ENCODE measurements at regions of chr3 and their contacts with region 1.

Region 1: GRCh38 chr3:197002701-197003454 is 26.7 kb downstream of the MELTF start:
- DNase-seq: peak; percentile 94
- CTCF ChIP-seq: peak; percentile 95

Region 2: DNA sequence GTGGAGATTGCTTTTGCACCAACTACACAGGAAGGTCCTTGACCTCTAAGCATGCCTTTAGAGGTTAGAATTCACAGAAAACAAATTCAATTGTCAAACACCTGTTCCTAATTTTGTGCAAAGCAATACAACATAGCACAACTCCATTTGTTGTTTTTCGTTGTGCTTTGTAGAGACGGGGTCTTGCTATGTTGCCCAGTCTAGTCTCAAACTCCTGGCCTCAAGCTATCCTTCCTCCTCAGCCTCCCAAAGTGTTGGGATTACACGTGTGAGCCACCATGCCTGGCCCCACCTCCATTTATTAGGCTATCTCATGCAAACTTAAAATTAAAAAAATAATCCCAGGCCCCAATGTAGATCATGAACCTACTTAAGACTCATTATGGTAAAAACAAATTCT is 66.6 kb before region 1 on chr3:
- CTCF ChIA-PET with region 1: no interaction called
- POLR2A ChIA-PET with region 1: no interaction called
- DNase-seq: no peak
- CTCF ChIP-seq: no peak

Region 3: GRCh38 chr3:197015766-197016736 is 13.2 kb after region 1 on chr3:
- CTCF ChIA-PET with region 1: interaction called, 21 read pairs
- POLR2A ChIA-PET with region 1: no interaction called
- DNase-seq: no peak
- CTCF ChIP-seq: no peak

Region 4: GRCh38 chr3:197023241-197023997 is 20.5 kb after region 1 on chr3:
- CTCF ChIA-PET with region 1: interaction called, 42 read pairs
- POLR2A ChIA-PET with region 1: interaction called, 3 read pairs
- DNase-seq: peak; percentile 77
- CTCF ChIP-seq: no peak

Region 5: DNA sequence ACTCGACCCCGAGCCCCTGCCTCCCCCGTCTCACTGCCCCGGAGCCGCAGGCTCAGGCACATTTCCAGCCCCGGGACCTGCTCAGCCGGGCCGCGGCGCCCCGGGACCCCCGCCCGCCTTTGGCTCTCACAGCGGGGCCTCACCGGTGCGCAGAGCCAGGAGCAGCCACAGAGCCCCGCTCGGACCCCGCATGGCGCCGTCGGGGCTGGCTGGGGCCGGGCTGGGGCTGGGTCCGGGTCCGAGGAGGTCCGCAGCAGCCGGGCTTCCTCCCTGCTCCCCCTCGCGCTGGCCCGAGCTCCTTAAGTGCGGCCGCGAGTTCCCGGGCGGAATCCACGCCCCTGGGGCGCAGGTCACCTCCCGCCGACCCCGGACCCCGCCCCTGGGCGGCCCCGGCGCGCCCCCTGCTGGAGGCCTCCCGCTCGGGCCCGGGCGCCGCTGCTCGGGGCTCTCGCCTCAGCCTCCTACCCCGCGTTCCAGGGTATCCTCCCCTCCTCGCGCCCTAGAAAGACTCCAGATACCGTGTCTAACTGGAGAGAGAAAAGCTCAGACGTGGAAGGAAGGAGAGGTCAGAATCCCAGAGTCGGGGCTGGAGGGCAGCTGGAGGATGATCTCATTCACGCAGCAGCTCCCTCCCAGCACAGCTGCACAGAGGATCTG is 26.8 kb after region 1 on chr3 and contains the start of gene MELTF:
- CTCF ChIA-PET with region 1: interaction called, 42 read pairs
- POLR2A ChIA-PET with region 1: interaction called, 6 read pairs
- DNase-seq: peak; percentile 98
- CTCF ChIP-seq: peak; percentile 73

Region 6: DNA sequence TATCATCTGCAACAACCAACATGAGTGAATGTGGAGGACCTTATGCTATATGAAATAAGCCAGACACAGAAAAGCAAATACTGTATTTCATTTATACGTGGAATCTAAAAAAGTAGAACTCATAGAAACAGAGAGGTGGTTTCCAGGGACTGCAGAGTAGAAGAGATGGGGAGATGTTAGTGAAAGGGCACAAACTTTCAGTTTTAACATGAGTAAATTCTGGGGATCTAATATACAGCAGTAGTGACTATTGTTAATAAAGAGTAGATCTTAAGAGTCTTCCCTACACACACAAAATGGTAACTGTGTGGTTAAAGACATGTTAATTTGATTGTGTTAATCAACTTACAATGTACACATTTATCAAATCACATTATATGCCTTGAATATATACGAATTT is 47.6 kb after region 1 on chr3:
- CTCF ChIA-PET with region 1: interaction called, 11 read pairs
- POLR2A ChIA-PET with region 1: no interaction called
- DNase-seq: peak; percentile 53
- CTCF ChIP-seq: no peak

Region 7: DNA sequence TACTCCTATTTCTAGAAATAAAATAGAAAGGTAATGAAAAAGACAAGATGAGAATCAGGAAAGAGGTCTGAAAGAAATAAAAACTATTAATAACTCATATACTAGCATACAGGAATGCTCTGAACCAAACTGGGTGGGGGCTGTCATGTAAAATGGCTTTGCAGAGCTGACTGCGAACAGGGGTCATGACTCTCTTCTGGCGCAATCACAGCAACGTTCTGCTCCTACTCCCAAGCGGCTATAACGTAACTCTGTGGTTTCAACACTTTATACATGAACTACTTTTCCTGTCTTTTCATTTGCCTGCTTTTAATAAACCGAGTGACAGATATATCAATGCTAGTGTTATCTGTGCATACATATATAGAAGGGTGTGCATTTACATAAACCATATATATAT is 178.9 kb after region 1 on chr3:
- CTCF ChIA-PET with region 1: interaction called, 47 read pairs
- POLR2A ChIA-PET with region 1: no interaction called
- DNase-seq: no peak
- CTCF ChIP-seq: no peak

Region 8: DNA sequence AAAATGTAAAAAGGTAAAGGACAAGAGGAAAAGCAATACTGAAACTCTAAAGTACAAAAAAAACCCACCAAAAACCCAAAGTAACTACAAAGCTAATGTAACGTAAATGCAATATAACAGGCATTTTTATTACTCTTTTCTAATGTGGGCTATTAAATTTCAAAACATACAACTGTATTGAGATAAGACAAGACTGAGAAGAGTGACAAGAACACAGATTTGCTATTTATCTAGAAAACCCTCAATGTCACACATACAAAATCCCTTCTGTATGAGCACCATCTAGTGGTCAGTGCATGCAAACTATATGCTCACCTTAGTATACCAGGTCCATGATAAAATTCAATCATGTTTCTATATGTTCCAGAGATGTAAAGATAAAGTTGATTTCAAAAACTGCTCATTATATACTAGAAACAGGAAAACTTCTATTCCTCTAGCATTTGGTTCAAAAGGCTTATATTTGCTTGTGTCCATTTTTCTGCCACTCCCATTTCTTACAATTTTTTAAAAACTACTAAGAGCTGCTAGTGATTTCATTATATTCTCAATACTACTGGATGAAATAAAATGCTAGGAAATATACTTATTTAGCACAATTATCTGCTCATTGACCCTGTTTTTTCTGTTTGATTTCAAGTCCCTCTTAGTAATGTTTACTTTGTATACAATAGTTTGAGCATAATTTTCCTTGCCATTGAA is 184.2 kb after region 1 on chr3:
- CTCF ChIA-PET with region 1: interaction called, 47 read pairs
- POLR2A ChIA-PET with region 1: no interaction called
- DNase-seq: peak; percentile 40
- CTCF ChIP-seq: peak; percentile 78